ENCODE measurements at regions of chr6 and their contacts with region 1.

Region 1: GRCh38 chr6:10478187-10479040 is 42.7 kb upstream of the GCNT2 start:
- DNase-seq: peak; percentile 44
- H3K27ac ChIP-seq: no peak overlapping the region
- CTCF ChIP-seq: peak; percentile 69

Region 2: GRCh38 chr6:10491463-10491862 is 13.0 kb after region 1 on chr6:
- CTCF ChIA-PET with region 1: interaction called, 15 read pairs
- POLR2A ChIA-PET with region 1: no interaction called
- DNase-seq: no peak
- H3K27ac ChIP-seq: no peak overlapping the region
- CTCF ChIP-seq: no peak

Region 3: GRCh38 chr6:10555625-10556309 is 77.4 kb after region 1 on chr6:
- CTCF ChIA-PET with region 1: interaction called, 11 read pairs
- POLR2A ChIA-PET with region 1: no interaction called
- DNase-seq: peak; percentile 44
- H3K27ac ChIP-seq: peak overlapping the region; percentile 56
- CTCF ChIP-seq: no peak